Sigmoid colon (tissue), 7 donors: ENCODE measurements at regions of chr4 and their contacts with region 1.

Region 1: GRCh38 chr4:74932816-74933561 is at the start of gene PARM1:
- DNase-seq: peak; percentile 95
- H3K4me3 ChIP-seq: peak within 1 kb of the TSS; percentile 53 to 78 (median 72)
- H3K27ac ChIP-seq: peak within 1 kb of the TSS; percentile 76 to 81 (median 78)
- H3K4me1 ChIP-seq: peaks cover 0 to 22% (median 13%) of the 10 kb centered on the region in 4 donors
- H3K27me3 ChIP-seq: no peaks in the 10 kb centered on the region
- CTCF ChIP-seq: peak; percentile 55 to 73 (median 58)
- EP300 ChIP-seq: no peak
- POLR2A ChIP-seq: peak in 1 of 2 donors; percentile 26
- total RNA-seq, gene PARM1: 21.9 to 60.9 (median 50.8) TPM

Region 2: GRCh38 chr4:74793757-74794340 is 139.1 kb before region 1 on chr4:
- intact Hi-C with region 1: loop called (anchors 10 kb)
- DNase-seq: peak; percentile 81
- H3K4me3 ChIP-seq: peak overlapping the region; percentile 65 to 74 (median 68)
- H3K27ac ChIP-seq: peak overlapping the region; percentile 89 to 95 (median 92)
- H3K4me1 ChIP-seq: peaks cover 0 to 33% (median 26%) of the 10 kb centered on the region in 4 donors
- H3K27me3 ChIP-seq: no peaks in the 10 kb centered on the region
- CTCF ChIP-seq: peak; percentile 9 to 55 (median 42)
- EP300 ChIP-seq: no peak
- POLR2A ChIP-seq: no peak

Region 3: GRCh38 chr4:74897386-74897785 is 35.6 kb before region 1 on chr4:
- intact Hi-C with region 1: no loop called
- DNase-seq: no peak
- H3K4me3 ChIP-seq: no peak overlapping the region
- H3K27ac ChIP-seq: no peak overlapping the region
- H3K4me1 ChIP-seq: no peaks in the 10 kb centered on the region
- H3K27me3 ChIP-seq: no peaks in the 10 kb centered on the region
- CTCF ChIP-seq: no peak
- EP300 ChIP-seq: no peak
- POLR2A ChIP-seq: no peak

Region 4: DNA sequence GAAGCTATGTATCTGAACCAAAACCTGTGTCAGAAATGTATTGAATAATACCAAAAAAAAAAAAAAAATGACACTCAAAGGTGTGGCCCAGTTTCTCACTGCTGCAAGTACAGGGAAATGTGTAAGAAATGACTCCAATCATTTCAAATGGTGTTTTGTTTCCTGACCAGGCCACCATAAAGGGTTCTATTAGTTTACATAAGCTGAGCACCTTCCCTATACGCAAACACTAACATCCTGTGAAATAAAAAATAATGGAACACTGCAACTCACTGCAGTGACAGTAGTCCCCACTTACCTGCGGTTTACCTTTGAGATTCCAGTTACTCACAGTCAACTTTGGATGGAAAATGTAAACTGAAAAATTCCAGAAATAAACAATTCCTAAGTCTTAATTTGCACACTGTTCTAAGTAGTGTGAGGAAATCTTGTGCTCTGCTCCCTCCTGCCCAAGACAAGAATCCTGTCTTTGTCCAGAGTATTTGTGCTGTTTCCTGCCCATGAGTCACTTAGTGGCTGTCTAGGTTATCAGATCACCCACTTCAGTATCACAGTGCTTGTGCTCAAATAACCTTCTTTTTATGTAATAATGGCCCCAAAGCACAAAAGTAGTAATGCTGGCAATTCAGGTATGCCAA is 315.9 kb after region 1 on chr4:
- intact Hi-C with region 1: loop called (anchors 10 kb)
- DNase-seq: no peak
- H3K4me3 ChIP-seq: no peak overlapping the region
- H3K27ac ChIP-seq: no peak overlapping the region
- H3K4me1 ChIP-seq: peaks cover 0 to 34% (median 16%) of the 10 kb centered on the region in 4 donors
- H3K27me3 ChIP-seq: no peaks in the 10 kb centered on the region
- CTCF ChIP-seq: no peak
- EP300 ChIP-seq: no peak
- POLR2A ChIP-seq: no peak

Region 5: GRCh38 chr4:75469896-75470295 is 536.9 kb after region 1 on chr4:
- intact Hi-C with region 1: loop called (anchors 5 kb)
- DNase-seq: no peak
- H3K4me3 ChIP-seq: no peak overlapping the region
- H3K27ac ChIP-seq: no peak overlapping the region
- H3K4me1 ChIP-seq: peaks cover 0 to 5% (median 0%) of the 10 kb centered on the region in 4 donors
- H3K27me3 ChIP-seq: no peaks in the 10 kb centered on the region
- CTCF ChIP-seq: no peak
- EP300 ChIP-seq: no peak
- POLR2A ChIP-seq: no peak

Region 6: GRCh38 chr4:75844151-75844662 is 911.2 kb after region 1 on chr4:
- intact Hi-C with region 1: loop called (anchors 10 kb)
- DNase-seq: no peak
- H3K4me3 ChIP-seq: no peak overlapping the region
- H3K27ac ChIP-seq: peak overlapping the region in 2 of 4 donors; percentile 49 to 50
- H3K4me1 ChIP-seq: peaks cover 0 to 18% (median 14%) of the 10 kb centered on the region in 4 donors
- H3K27me3 ChIP-seq: no peaks in the 10 kb centered on the region
- CTCF ChIP-seq: no peak
- EP300 ChIP-seq: no peak
- POLR2A ChIP-seq: no peak